Activated CD4-positive, alpha-beta T cell treated with anti-CD3 and anti-CD28 coated beads, Interleukin-2, amount 10 ng/mL, durations not matched to agents 7 days and 5 days (primary cell): ENCODE measurements at regions of chr14 and their contacts with region 1.

Region 1: GRCh38 chr14:61290701-61291100 is 9.6 kb upstream of the TMEM30B start:
- DNase-seq: no peak
- H3K4me3 Mint-ChIP-seq: no peak overlapping the region
- H3K27ac Mint-ChIP-seq: no peak overlapping the region
- H3K4me1 Mint-ChIP-seq: peaks cover 13% of the 10 kb centered on the region
- H3K27me3 Mint-ChIP-seq: no peaks in the 10 kb centered on the region

Region 2: DNA sequence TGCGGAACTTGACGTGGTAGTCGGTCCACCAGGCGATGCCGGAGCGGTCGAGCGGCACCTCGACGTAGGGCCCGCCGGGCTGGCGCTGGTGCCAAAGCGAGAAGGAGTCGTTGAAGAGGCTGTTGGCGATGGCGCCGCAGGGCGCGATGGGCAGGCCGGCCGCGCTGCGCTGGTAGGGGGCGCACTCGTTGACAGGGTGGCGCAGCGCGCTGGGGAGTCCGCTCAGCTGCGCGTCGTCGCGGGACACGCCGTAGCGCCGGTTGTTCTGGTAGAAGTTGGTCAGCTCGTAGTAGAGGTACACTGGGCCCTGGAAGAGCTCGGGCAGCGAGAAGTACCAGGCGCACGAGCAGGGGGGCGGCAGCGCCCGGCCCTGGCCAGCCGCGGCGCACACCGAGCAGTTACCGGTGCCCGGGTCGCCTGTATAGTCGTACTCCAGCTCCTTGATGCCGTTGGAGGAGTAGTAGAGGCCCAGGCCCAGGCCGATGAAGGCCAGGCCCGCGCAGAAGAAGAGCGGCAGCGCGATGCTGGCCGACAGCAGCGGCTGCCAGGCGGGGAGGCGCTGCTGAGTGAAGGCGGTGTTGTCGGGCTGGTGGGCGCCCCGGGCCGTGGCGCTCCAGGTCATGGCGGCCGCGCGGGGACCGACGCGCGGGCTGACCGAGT is 10.0 kb before region 1 on chr14:
- CTCF ChIA-PET with region 1: interaction called, 15 read pairs
- POLR2A ChIA-PET with region 1: no interaction called
- DNase-seq: peak; percentile 71
- H3K4me3 Mint-ChIP-seq: peak overlapping the region; percentile 83
- H3K27ac Mint-ChIP-seq: peak overlapping the region; percentile 87
- H3K4me1 Mint-ChIP-seq: peaks cover 29% of the 10 kb centered on the region
- H3K27me3 Mint-ChIP-seq: peaks cover 30% of the 10 kb centered on the region